Heart right ventricle (tissue), 16 donors: ENCODE measurements at regions of chr14 and their contacts with region 1.

Region 1: DNA sequence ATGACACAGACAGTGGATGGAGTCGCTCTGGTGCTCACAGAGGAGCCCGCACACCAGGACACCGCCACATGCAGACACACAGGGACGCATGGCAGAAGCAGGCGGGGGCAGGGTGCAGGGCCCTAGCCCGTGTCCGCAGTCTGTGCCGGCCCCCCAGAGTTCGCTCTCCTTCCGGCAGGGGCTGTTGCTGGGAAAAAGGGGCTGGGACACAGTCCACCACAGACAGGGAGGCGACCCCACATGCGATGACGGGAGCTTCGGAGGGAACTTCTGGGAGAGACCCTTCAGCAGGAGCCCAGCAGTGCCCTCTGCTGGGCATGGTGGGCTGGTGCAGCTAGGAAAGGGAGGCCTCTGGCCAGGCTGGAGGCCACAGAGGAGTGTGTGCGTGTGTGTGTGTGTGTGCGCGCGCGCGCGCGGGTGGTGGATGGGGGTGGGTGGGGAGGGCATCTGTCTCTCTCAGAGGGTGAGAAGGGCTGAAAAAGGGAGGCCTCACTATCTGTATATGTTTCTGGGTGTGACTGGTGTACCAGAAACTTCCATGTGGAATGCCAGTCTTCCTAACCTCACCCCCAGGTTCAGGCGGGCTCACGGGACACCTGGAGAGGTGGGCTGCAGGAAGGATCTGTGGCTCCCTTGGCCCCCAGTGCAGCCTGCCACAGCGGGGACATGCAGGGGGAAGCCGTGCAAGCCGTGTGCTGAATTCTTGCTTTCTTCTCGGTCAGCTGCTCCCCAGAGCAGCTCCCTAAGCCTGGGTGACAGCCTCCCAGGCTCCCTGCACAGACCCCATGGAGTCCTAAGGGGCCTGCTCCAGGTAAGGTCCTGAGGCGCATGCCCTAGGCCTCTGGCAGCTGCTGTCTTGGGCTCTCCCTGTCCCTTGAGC is 60.7 kb downstream of the PLEKHG3 start:
- DNase-seq: peak; percentile 70 to 77
- ATAC-seq: peak; percentile 45 to 77 (median 66)
- H3K4me3 ChIP-seq: peak overlapping the region in 8 of 10 donors; percentile 10 to 36 (median 25)
- H3K27ac ChIP-seq: peak overlapping the region in 9 of 10 donors; percentile 31 to 85 (median 49)
- H3K4me1 ChIP-seq: peaks cover 26 to 51% (median 44%) of the 10 kb centered on the region in 9 donors
- H3K27me3 ChIP-seq: no peaks in the 10 kb centered on the region
- CTCF ChIP-seq: peak; percentile 72 to 95 (median 90)

Region 2: DNA sequence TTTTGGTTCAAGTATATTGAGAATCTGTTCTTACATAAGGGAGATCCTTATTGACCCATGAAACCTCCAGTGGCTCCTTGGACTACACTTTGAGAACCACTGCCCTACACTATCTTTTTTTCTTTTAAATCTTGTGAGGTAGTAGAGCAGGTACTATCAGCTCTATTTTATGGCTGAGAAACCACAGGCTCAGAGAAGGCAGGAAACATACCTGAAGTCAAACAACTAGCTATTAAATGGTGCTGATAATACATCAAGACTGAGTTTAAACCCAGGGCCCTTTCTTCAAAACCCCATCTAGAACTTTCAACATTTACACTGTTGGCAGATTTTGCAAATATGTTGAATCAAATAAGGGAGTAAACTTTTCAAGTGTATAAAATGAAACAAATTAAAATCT is 268.1 kb before region 1 on chr14:
- intact Hi-C with region 1: no loop called
- DNase-seq: no peak
- ATAC-seq: no peak
- H3K4me3 ChIP-seq: no peak overlapping the region
- H3K27ac ChIP-seq: peak overlapping the region in 4 of 10 donors; percentile 47 to 78 (median 72)
- H3K4me1 ChIP-seq: peaks cover 2 to 66% (median 34%) of the 10 kb centered on the region in 9 donors
- H3K27me3 ChIP-seq: no peaks in the 10 kb centered on the region
- CTCF ChIP-seq: no peak

Region 3: GRCh38 chr14:64671591-64671990 is 93.3 kb before region 1 on chr14:
- intact Hi-C with region 1: loop called (anchors 1 to 5 kb)
- DNase-seq: peak in 1 of 2 donors; percentile 31
- ATAC-seq: peak in 7 of 8 donors; percentile 44 to 76 (median 54)
- H3K4me3 ChIP-seq: no peak overlapping the region
- H3K27ac ChIP-seq: peak overlapping the region in 1 of 10 donors; percentile 22
- H3K4me1 ChIP-seq: peaks cover 0 to 37% (median 0%) of the 10 kb centered on the region in 9 donors
- H3K27me3 ChIP-seq: no peaks in the 10 kb centered on the region
- CTCF ChIP-seq: peak; percentile 59 to 80 (median 77)

Region 4: GRCh38 chr14:64708148-64709004 is 56.5 kb before region 1 on chr14:
- intact Hi-C with region 1: loop called in 1 of 10 experiments (anchors 5 kb)
- DNase-seq: peak; percentile 24 to 54
- ATAC-seq: peak in 4 of 8 donors; percentile 3 to 35 (median 19)
- H3K4me3 ChIP-seq: peak overlapping the region in 8 of 10 donors; percentile 12 to 89 (median 22)
- H3K27ac ChIP-seq: peak overlapping the region; percentile 3 to 90 (median 75)
- H3K4me1 ChIP-seq: peaks cover 17 to 79% (median 69%) of the 10 kb centered on the region in 9 donors
- H3K27me3 ChIP-seq: peaks cover 0 to 19% (median 0%) of the 10 kb centered on the region in 7 donors
- CTCF ChIP-seq: no peak

Region 5: GRCh38 chr14:64726585-64726890 is 38.3 kb before region 1 on chr14:
- intact Hi-C with region 1: loop called in 1 of 10 experiments (anchors 5 kb)
- DNase-seq: no peak
- ATAC-seq: no peak
- H3K4me3 ChIP-seq: no peak overlapping the region
- H3K27ac ChIP-seq: peak overlapping the region in 1 of 10 donors; percentile 31
- H3K4me1 ChIP-seq: peaks cover 24 to 75% (median 52%) of the 10 kb centered on the region in 9 donors
- H3K27me3 ChIP-seq: no peaks in the 10 kb centered on the region
- CTCF ChIP-seq: no peak

Region 6: DNA sequence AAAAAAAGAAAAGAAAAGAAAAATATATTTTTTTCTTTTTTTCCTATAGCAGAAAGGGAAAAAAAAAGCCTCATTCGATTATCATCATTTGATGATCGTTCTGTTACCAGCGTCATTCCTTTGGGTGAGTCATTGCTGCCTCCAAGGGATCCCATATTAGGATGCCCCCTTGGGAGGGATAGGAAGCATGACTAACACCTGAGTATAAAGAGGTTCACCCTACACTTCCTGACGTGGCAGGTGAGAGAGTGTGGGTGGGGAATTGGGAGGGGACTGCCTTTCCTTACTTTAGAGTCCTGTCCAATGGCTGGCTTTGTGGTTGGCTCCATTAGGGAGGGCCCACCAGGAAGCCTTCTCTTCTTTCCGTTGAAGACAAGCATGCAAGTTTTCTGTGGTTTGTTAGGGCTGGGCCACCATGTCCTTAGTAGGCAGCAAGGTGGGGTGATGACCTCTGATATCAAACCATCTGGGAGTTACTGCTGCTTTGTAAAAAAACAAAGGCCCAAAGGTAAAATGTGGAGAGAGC is 591.5 kb after region 1 on chr14:
- intact Hi-C with region 1: no loop called
- DNase-seq: no peak
- ATAC-seq: peak in 1 of 8 donors; percentile 31
- H3K4me3 ChIP-seq: no peak overlapping the region
- H3K27ac ChIP-seq: no peak overlapping the region
- H3K4me1 ChIP-seq: peaks cover 0 to 26% (median 6%) of the 10 kb centered on the region in 9 donors
- H3K27me3 ChIP-seq: no peaks in the 10 kb centered on the region
- CTCF ChIP-seq: no peak